ENCODE measurements at regions of chr19 and their contacts with region 1.

Region 1: DNA sequence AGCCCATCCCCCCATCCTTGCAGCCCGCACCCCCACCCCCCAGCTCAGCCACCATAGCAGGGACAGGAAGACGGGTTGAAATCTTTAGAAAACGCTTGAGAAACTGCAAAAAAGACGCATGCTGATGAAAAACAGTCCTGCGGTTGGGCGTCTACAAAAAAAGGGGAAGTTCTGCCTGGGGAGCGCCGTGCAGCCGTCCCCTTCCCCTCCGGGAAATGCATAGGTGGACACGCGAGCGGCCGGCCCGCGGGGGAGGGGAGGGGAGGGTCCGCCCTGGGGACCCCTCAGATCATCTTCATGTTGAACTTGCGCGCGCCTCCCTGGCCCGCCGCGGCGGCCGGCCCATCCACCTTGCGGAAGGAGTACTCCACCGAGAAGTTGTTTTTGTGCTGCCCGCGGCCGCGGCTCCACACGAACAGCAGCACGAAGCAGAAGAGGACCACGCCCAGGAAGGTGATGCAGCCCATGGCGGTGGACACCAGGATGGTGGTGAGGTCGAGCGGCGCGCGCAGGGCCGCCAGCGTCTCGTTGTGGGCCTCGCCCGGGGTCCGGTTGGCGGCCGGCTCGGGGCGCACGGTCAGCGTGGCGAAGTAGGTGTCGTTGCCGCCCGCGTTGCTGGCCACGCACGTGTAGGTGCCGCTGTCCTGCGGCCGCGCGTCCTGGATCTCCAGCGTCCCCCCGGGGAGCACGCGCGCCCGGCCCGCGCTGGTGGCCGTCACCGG is 7.9 kb upstream of the PEAK3 start:
- DNase-seq: peak; percentile 81
- H3K4me3 Mint-ChIP-seq: peak overlapping the region; percentile 84
- H3K27ac Mint-ChIP-seq: peak overlapping the region; percentile 98
- H3K4me1 Mint-ChIP-seq: peaks cover 36% of the 10 kb centered on the region
- H3K27me3 Mint-ChIP-seq: no peaks in the 10 kb centered on the region

Region 2: GRCh38 chr19:1975162-1975480 is 314.8 kb before region 1 on chr19:
- CTCF ChIA-PET with region 1: no interaction called
- POLR2A ChIA-PET with region 1: no interaction called
- DNase-seq: no peak
- H3K4me3 Mint-ChIP-seq: no peak overlapping the region
- H3K27ac Mint-ChIP-seq: no peak overlapping the region
- H3K4me1 Mint-ChIP-seq: peaks cover 3% of the 10 kb centered on the region
- H3K27me3 Mint-ChIP-seq: no peaks in the 10 kb centered on the region

Region 3: DNA sequence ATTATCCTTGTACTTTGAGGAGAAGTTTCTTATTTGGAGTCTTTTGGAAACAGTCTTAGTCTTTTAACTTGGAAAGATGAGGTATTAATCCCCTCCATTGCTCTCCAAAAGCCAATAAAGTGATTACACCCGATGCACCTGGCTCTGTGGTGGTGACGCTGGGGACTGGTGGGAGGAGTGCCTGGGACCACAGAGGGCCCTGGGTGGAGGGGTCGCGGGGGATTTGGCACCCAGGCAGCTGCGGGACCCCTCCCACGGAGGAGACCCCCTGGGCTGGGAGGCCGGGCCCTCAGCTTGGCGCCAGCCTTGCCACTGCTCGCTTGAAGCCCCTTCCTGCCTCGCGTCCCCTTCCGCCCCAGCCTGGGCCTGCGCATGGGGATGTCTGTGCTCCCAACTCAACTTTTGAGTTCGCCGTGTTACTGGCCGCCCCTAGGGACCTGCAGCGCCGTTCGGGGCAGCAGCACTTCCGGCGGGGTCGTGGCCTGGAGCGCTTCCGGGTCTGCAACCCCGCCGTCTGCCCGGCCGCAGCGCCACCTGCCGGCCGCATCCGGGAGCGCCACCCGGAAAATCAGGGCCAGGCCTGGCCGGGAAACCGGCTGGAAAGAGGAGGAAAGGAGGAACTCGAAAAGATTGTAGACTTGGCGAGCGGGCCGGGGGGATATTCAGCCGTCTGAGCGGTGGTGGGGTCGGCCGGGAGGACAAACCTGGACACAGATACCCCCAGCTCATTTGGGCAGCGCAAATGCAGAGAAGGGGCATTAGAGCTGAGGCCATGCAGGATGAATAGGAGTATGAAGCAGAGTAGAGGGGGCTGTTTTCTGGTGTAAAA is 16.3 kb before region 1 on chr19:
- CTCF ChIA-PET with region 1: interaction called, 49 read pairs
- POLR2A ChIA-PET with region 1: interaction called, 3 read pairs
- DNase-seq: peak; percentile 80
- H3K4me3 Mint-ChIP-seq: peak overlapping the region; percentile 56
- H3K27ac Mint-ChIP-seq: peak overlapping the region; percentile 79
- H3K4me1 Mint-ChIP-seq: peaks cover 31% of the 10 kb centered on the region
- H3K27me3 Mint-ChIP-seq: no peaks in the 10 kb centered on the region

Measured in activated CD4-positive, alpha-beta T cell treated with anti-CD3 and anti-CD28 coated beads, Interleukin-2, amount 10 ng/mL, durations not matched to agents 7 days and 5 days (primary cell).